HEK293T (cell line): ENCODE measurements at regions of chr6 and their contacts with region 1.

Region 1: GRCh38 chr6:35736253-35736894 is 458 bp upstream of the ARMC12 start:
- DNase-seq: peak; percentile 66

Region 2: DNA sequence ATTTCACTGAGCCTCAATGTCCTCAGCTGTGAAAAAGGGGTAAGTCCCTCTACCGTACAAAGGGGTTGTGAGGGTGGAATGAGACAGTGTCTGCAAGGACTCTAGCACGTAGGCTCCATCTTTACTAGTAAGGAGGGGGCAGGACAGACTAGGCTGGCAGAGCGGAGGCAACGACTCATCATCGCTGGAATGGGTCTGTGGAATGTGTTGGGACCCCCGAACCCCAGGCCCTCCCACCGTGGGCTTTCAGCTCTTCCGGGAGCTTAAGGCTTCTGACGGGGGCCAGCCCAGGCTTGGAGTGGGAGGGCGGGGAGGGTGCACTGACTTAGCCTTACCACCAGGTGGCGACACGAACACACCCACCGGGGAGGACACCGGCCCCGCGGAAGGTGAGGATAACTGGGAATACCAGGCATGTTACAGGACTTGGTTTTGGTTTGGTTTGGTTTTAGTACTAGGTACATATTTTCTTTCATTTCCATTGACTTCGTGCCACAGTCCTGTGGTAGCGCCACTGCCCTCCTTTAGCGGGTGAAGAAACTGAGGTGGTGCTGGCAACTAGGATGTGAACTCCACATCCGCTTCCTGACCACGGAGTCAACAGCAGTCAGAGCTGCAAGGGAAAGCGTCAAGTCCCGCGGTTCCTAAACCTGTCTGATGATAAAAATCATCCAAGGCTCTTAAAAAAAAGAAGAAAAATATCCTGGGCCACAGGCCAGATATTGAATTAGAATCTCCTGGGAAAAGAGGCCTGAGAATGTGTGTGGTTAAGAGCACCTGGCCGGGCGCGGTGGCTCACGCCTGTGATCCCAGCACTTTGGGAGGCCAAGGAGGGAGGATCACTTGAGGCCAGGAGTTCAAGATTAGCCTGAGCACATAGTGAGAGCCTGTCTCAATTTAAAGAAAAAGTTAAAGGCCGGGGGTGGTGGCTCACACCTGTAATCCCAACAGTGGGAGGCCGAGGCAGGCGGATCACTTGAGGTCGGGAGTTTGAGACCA is 213.4 kb before region 1 on chr6:
- CTCF ChIA-PET with region 1: interaction called, 43 read pairs
- POLR2A ChIA-PET with region 1: no interaction called
- DNase-seq: peak; percentile 91

Region 3: DNA sequence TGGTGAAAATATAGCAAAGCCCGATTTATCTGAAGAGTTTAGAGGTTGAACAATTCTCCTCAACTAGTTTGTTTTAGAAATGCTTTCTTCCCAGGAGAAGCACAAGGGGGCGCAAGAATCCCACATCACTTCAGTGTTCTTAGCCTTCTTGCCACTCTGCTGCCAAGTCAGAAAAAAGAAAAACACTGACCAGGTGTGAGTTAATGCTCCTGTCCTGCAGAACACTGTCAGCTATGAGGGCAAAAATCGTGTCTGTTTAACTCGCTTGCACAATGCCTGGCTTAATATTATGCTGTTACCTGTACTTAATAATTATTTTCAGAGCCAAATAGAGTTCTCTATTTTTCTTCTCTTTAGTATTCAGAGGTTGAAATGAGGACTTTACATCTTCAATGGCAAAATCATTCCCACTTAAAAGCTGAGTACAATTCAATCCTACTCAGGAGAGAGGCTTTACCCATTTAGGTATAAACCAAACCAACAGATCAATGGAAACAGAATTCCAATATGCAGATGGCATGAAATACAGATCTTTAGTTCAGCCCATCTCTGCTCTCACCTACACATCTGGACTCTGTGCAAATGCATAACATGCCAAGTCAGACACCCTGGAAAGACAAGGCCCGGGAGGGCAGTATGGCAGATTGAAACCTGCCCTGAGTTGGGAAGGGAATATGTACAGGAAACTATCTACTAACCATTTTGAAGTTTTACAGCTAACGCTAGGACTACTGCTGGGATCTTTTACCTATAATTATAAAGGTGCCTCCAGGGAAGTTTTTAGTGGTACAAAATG is 152.3 kb before region 1 on chr6:
- CTCF ChIA-PET with region 1: interaction called, 26 read pairs
- POLR2A ChIA-PET with region 1: interaction called, 3 read pairs
- DNase-seq: peak; percentile 65